Lower lobe of right lung (tissue), 2 donors: ENCODE measurements at regions of chr18 and their contacts with region 1.

Region 1: DNA sequence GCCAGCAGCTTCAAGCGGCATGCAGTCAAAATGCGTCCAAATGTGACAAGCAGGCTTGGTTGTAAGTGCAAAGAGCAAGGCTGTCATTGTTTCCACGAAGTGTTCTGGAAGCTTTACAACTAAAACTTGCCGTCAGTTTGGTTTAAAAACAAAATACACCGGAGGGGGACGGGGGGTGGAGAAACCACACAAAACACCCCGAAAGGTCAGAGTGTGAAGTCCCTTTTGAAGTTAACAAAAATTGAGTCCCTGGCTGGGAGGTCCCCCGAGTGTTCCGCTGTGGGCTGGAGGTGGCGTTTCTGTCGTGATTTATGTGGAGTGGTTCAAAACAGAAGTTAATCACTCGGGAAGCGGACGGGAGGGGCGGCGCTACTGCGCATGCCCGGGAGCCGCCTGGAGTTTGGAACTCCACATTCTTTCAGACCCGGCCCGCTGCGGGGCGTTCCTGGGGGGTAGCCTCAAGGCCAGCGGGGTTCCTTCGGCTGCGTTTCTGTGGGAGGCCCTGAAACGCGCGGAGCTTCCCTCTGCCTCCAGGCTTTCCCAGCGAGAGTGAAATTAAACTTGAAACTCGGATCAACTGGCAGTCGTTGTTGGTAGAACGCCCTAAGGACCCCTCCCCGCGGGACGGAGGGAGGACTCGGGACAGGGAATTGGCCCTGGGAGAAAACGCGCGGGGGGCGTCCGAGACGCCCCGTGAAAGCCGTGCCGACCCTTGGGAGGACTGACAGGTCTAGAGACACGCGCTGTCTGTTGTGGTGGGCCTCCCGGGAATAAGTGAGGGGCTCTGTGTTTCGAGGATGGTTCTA is 1.4 kb downstream of the TGIF1 start:
- DNase-seq: peak; percentile 96
- ATAC-seq: peak; percentile 54 to 55
- H3K4me3 ChIP-seq: peak overlapping the region; percentile 81
- H3K27ac ChIP-seq: peak overlapping the region; percentile 99
- H3K4me1 ChIP-seq: peaks cover 34% of the 10 kb centered on the region
- H3K27me3 ChIP-seq: no peaks in the 10 kb centered on the region
- CTCF ChIP-seq: no peak

Region 2: GRCh38 chr18:3230401-3231334 is 220.7 kb before region 1 on chr18:
- intact Hi-C with region 1: no loop called
- DNase-seq: peak; percentile 52
- ATAC-seq: peak; percentile 94 to 95
- H3K4me3 ChIP-seq: peak overlapping the region; percentile 31
- H3K27ac ChIP-seq: no peak overlapping the region
- H3K4me1 ChIP-seq: no peaks in the 10 kb centered on the region
- H3K27me3 ChIP-seq: no peaks in the 10 kb centered on the region
- CTCF ChIP-seq: no peak

Region 3: GRCh38 chr18:3281456-3282400 is 169.7 kb before region 1 on chr18:
- intact Hi-C with region 1: loop called (anchors 10 kb)
- DNase-seq: no peak
- ATAC-seq: peak; percentile 82 to 88
- H3K4me3 ChIP-seq: no peak overlapping the region
- H3K27ac ChIP-seq: no peak overlapping the region
- H3K4me1 ChIP-seq: peaks cover 20% of the 10 kb centered on the region
- H3K27me3 ChIP-seq: no peaks in the 10 kb centered on the region
- CTCF ChIP-seq: peak; percentile 69

Region 4: DNA sequence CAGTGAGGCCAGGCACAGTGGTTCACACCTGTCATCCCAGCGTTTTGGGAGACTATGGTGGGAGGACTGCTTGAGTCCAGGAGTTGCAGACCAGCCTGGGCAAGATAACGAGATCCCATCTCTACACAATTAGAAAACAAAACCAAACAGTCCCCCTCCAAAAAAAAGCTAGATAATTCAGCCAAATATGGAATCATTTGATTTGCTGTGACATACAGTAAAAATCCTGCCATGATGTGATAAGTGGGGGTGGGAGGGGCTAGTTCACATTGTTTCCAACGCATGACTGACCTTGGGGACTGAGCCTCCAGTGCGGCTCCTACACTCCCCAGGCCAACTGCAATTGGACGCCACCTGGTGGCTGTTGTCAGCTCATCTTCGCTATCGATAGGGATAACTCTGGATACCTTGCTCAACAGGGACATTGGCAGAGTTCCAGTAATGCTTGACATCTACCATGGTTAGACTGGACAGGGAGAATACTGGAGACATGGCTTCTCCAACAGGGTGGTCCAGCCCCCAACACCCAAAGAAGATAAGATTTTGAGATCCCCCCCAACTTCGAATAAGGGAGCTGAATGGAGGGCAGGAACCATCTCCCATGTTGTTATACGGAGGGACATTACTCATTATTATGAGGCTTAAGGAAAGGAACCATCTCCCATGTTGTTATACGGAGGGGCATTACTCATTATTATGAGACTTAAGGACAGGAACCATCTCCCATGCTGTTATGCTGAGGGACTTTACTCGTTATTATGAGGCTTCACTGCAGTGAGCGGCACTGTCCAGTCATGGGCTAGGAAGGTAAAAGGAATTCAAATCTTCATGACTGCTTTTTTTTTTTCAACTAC is 134.5 kb after region 1 on chr18:
- intact Hi-C with region 1: loop called (anchors 10 kb)
- DNase-seq: peak; percentile 89
- ATAC-seq: peak; percentile 95 to 96
- H3K4me3 ChIP-seq: no peak overlapping the region
- H3K27ac ChIP-seq: no peak overlapping the region
- H3K4me1 ChIP-seq: no peaks in the 10 kb centered on the region
- H3K27me3 ChIP-seq: no peaks in the 10 kb centered on the region
- CTCF ChIP-seq: peak; percentile 76

Region 5: DNA sequence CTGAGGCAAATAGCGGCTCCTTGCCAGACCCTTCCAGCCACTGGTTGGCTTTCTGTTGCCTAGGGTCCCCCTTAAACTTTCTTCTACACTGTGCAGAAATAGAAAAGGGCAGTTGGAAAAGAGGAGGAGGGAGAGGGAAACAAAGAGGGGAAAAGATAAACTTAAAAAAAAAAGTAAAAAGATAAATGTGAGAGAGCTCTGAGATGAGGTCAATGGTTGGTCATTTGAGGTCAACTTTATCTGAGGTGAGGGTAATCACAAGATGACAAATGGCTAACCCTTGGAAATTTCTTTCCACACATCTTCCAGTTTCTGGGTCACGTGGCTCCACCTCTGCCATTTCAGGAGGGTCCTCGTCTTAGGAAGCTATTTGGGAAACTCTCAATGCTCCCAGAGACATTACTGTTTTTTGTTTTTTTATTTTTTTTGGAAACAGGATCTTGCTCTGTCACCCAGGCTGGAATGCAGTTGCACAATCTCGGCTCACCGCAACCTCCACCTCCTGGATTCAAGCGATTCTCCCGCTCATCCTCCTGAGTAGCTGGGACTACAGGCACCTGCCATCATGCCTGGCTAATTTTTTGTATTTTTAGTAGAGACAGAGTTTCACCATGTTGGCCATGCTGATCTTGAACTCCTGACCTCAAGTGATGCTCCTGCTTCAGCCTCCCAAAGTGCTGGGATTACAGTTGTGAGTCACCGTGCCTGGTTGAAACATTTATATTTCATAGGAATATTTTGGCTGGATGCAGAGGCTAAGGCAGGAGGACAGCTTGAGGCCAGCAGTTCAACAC is 198.4 kb after region 1 on chr18:
- intact Hi-C with region 1: no loop called
- DNase-seq: no peak
- ATAC-seq: no peak
- H3K4me3 ChIP-seq: no peak overlapping the region
- H3K27ac ChIP-seq: no peak overlapping the region
- H3K4me1 ChIP-seq: peaks cover 16% of the 10 kb centered on the region
- H3K27me3 ChIP-seq: no peaks in the 10 kb centered on the region
- CTCF ChIP-seq: no peak